ENCODE measurements at regions of chr14 and their contacts with region 1.

Region 1: GRCh38 chr14:50231475-50232275 is at the start of gene SOS2:
- DNase-seq: peak; percentile 83
- H3K4me3 Mint-ChIP-seq: peak within 1 kb of the TSS; percentile 76
- H3K27ac Mint-ChIP-seq: peak within 1 kb of the TSS; percentile 87
- H3K4me1 Mint-ChIP-seq: peaks cover 33% of the 10 kb centered on the region
- H3K27me3 Mint-ChIP-seq: no peaks in the 10 kb centered on the region
- total RNA-seq, gene SOS2: 20.3 to 22.1 TPM

Region 2: GRCh38 chr14:49692811-49693734 is 538.6 kb before region 1 on chr14 and contains the start of gene KLHDC1:
- CTCF ChIA-PET with region 1: no interaction called
- intact Hi-C with region 1: loop called (anchors 1 kb)
- DNase-seq: peak; percentile 84
- H3K4me3 Mint-ChIP-seq: peak within 1 kb of the TSS; percentile 81
- H3K27ac Mint-ChIP-seq: peak within 1 kb of the TSS; percentile 62
- H3K4me1 Mint-ChIP-seq: peaks cover 34% of the 10 kb centered on the region
- H3K27me3 Mint-ChIP-seq: no peaks in the 10 kb centered on the region
- total RNA-seq, gene KLHDC1: 0.57 to 0.79 TPM

Region 3: GRCh38 chr14:50003213-50004031 is 228.3 kb before region 1 on chr14:
- CTCF ChIA-PET with region 1: no interaction called
- intact Hi-C with region 1: loop called (anchors 1 kb)
- DNase-seq: peak; percentile 86
- H3K4me3 Mint-ChIP-seq: peak overlapping the region; percentile 92
- H3K27ac Mint-ChIP-seq: peak overlapping the region; percentile 98
- H3K4me1 Mint-ChIP-seq: peaks cover 42% of the 10 kb centered on the region
- H3K27me3 Mint-ChIP-seq: no peaks in the 10 kb centered on the region

Region 4: DNA sequence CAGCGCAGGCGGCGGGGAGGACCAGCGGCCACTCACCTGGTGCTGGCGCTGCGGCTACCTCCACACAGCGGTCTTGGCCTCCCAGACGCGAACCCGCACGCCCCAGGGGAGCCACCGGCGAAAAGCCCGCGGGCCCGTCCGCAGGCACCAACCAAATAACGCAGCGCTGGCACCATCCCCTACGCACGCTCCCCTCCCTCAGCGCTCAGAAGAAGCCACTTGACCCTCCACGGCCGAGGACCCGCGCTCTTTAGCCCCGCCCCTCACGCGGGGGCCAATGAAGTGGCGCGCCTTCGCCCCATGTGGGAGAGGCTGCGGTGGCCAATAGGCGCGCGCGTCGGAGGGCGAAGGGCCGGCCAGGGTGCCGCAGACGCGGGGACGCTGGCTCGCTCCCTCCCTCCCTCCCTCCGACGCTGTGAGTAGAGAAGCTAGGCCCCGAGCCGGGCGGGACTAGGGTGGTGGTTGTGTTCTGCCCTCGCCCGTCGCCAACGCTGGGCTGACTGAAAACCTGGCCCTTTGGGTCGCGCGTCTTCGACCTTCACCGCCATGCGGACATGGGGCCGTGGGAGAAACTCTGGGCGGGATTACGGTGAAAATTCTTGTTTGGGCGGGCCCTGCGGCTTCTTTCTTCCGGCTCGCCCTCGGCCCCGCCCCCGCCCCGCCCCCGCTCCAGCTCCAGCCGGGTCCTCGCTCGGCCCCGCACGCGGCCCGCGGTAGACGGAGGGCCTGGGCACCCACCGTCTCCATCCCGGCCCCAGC is 80.5 kb after region 1 on chr14 and contains the starts of genes DMAC2L and L2HGDH:
- CTCF ChIA-PET with region 1: no interaction called
- intact Hi-C with region 1: loop called (anchors 1 kb)
- DNase-seq: peak; percentile 89
- H3K4me3 Mint-ChIP-seq: peak within 1 kb of the TSS; percentile 94
- H3K27ac Mint-ChIP-seq: peak within 1 kb of the TSS; percentile 95
- H3K4me1 Mint-ChIP-seq: peaks cover 41% of the 10 kb centered on the region
- H3K27me3 Mint-ChIP-seq: no peaks in the 10 kb centered on the region
- total RNA-seq, gene DMAC2L: 11.7 to 13.7 TPM
- total RNA-seq, gene L2HGDH: 13.5 to 14.3 TPM

Region 5: GRCh38 chr14:50357124-50357820 is 125.6 kb after region 1 on chr14:
- CTCF ChIA-PET with region 1: no interaction called
- intact Hi-C with region 1: no loop called
- DNase-seq: no peak
- H3K4me3 Mint-ChIP-seq: no peak overlapping the region
- H3K27ac Mint-ChIP-seq: no peak overlapping the region
- H3K4me1 Mint-ChIP-seq: peaks cover 3% of the 10 kb centered on the region
- H3K27me3 Mint-ChIP-seq: no peaks in the 10 kb centered on the region

Region 6: DNA sequence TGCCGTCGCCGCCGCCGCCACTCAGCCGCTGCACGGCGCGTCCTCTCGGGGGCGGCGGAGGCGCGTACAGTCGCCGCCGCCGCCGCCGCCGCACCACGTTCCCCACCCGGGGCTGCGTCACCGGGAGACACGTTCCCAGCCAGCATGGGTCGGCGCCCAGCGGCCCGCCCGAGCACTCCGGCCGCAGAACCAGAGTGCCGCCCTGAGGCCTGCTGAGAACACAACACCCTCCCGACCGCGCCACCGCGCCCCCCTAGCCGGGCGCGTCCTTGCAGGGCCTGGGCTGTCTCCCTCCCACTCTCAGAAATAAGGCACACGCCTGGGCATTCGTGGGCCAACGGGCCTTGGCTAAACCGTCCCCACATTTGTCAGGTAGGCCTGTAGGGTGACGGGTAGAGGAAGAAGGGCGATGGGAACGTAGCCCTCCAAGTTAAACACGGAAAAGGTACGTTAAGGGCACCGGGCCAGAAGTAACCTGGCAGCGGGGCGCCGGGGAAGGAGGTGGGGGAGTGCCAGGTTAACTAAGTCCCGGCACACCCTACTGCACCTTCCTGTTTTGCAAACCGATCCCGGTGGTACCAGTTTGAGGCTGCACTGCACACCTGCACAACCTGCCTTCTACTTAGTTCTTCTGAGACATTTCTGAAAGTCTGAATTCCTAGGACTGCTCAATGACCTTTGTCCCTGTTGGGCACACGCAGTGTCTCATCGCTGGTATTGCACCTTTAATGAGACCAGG is 301.0 kb after region 1 on chr14 and contains the start of gene MAP4K5:
- CTCF ChIA-PET with region 1: no interaction called
- intact Hi-C with region 1: loop called (anchors 1 kb)
- DNase-seq: peak; percentile 89
- H3K4me3 Mint-ChIP-seq: peak within 1 kb of the TSS; percentile 85
- H3K27ac Mint-ChIP-seq: peak within 1 kb of the TSS; percentile 72
- H3K4me1 Mint-ChIP-seq: peaks cover 45% of the 10 kb centered on the region
- H3K27me3 Mint-ChIP-seq: no peaks in the 10 kb centered on the region
- total RNA-seq, gene MAP4K5: 10.2 to 11.2 TPM

Region 7: DNA sequence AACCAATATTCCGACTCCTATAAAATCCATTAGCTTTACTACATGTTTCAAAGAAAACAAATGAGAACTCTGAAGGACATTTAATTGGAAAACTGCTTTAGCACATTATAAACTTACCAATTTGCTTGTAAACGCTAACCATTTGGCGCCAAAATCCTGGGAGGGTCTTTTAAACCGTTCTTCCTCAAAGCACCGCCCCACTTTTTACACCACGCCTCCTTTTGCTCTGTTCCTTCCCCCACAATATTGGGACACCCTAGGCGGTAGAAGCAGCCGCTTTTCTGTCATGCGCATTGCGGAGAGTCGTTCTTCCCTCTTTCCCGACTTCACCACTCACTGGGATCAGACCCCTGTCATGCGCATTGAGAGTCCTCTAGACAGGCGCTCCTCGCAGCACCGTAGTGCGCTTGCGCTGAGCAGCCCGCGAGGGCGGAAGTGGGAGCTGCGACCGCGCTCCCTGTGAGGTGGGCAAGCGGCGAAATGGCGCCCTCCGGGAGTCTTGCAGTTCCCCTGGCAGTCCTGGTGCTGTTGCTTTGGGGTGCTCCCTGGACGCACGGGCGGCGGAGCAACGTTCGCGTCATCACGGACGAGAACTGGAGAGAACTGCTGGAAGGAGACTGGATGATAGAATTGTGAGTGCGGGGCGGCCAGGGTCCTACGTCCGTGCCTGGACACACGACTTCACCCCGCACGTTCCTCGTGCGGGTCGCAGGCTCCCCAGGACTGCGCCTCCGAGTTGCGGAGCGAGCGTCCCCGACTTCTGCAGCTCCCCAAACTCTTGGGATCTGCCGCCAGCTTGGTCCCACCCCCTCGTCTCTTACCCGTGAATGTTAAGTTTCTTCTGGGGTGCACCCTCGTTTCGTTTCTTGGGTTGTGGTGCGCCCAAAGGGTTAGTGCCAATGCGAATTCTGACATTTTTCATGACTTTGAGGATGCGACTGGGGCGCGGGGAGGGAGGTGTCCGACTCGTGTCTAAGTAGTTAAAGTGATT is 1008.4 kb after region 1 on chr14 and contains the start of gene TMX1:
- CTCF ChIA-PET with region 1: no interaction called
- intact Hi-C with region 1: loop called (anchors 10 kb)
- DNase-seq: peak; percentile 95
- H3K4me3 Mint-ChIP-seq: no peak within 1 kb of the TSS
- H3K27ac Mint-ChIP-seq: no peak within 1 kb of the TSS
- H3K4me1 Mint-ChIP-seq: peaks cover 28% of the 10 kb centered on the region
- H3K27me3 Mint-ChIP-seq: no peaks in the 10 kb centered on the region
- total RNA-seq, gene TMX1: 59.4 to 59.6 TPM

Measured in activated naive CD4-positive, alpha-beta T cell treated with anti-CD3 and anti-CD28 coated beads for 36 hours (primary cell).